ENCODE measurements at regions of chr2 and their contacts with region 1.

Region 1: GRCh38 chr2:113080134-113080533 is 12.4 kb downstream of the IL1F10 start:
- DNase-seq: peak; percentile 28
- H3K4me3 Mint-ChIP-seq: no peak overlapping the region
- H3K27ac Mint-ChIP-seq: no peak overlapping the region
- H3K4me1 Mint-ChIP-seq: peaks cover 16% of the 10 kb centered on the region
- H3K27me3 Mint-ChIP-seq: peaks cover 11% of the 10 kb centered on the region

Region 2: GRCh38 chr2:113124181-113124961 is 44.2 kb after region 1 on chr2:
- intact Hi-C with region 1: loop called (anchors 5 kb)
- DNase-seq: no peak
- H3K4me3 Mint-ChIP-seq: no peak overlapping the region
- H3K27ac Mint-ChIP-seq: peak overlapping the region; percentile 51
- H3K4me1 Mint-ChIP-seq: peaks cover 71% of the 10 kb centered on the region
- H3K27me3 Mint-ChIP-seq: no peaks in the 10 kb centered on the region

Region 3: GRCh38 chr2:113181258-113182051 is 101.3 kb after region 1 on chr2:
- intact Hi-C with region 1: loop called (anchors 2 kb)
- DNase-seq: no peak
- H3K4me3 Mint-ChIP-seq: no peak overlapping the region
- H3K27ac Mint-ChIP-seq: peak overlapping the region; percentile 75
- H3K4me1 Mint-ChIP-seq: peaks cover 74% of the 10 kb centered on the region
- H3K27me3 Mint-ChIP-seq: no peaks in the 10 kb centered on the region

Region 4: DNA sequence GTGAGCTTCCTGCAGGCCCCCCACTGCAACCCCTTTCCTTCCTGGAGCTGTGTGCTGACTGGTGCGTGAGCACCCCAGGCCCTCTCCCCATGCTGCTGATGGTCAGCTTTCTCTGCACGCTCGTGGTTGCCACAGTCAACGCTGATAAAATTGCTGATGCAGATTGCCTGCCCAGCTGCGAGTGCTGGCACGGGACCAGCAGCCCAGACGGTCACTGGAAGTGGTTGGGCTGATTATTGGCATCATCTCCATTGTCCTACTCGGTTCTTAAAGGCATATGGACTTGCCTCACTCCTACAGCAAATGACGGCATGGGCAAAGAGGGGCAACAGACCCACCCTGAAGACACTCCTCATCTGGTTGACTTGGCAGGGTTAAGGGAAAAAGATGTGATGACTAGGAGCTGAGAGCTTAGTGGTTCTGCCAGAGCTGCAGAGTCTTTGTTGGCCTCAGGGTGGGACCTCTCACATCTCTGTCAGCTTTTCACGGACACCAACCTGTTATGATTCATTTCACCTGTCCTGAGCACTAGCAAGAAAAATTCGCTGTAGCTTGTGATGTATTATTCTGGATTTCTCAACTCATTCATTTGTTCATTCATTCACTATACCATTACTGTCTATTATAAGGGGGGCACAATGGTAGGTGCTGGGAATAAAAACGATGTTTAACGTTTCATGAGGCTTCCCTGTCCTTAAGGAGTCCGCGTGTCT is 160.2 kb after region 1 on chr2:
- intact Hi-C with region 1: loop called (anchors 5 kb)
- DNase-seq: no peak
- H3K4me3 Mint-ChIP-seq: no peak overlapping the region
- H3K27ac Mint-ChIP-seq: peak overlapping the region; percentile 80
- H3K4me1 Mint-ChIP-seq: peaks cover 20% of the 10 kb centered on the region
- H3K27me3 Mint-ChIP-seq: no peaks in the 10 kb centered on the region

Measured in activated T-helper 2 cell treated with anti-CD3 and anti-CD28 coated beads, Interferon-gamma antibody, Interleukin-2, Interleukin-4, amounts not matched to agents 10 μg/mL and 5 μg/mL and 100 μg/mL, durations not matched to agents 14 hours and 24 hours and 36 hours (primary cell).